ENCODE measurements at regions of chr3 and their contacts with region 1.

Region 1: GRCh38 chr3:46078712-46079400 is 51.6 kb upstream of the XCR1 start:
- DNase-seq: peak; percentile 78 to 94 (median 91)
- ATAC-seq: peak; percentile 99
- H3K4me3 ChIP-seq: no peak overlapping the region
- H3K4me3 Mint-ChIP-seq: no peak overlapping the region
- H3K27ac ChIP-seq: no peak overlapping the region
- H3K27ac Mint-ChIP-seq: no peak overlapping the region
- H3K4me1 ChIP-seq: peaks cover 6% of the 10 kb centered on the region
- H3K4me1 Mint-ChIP-seq: peaks cover 14% of the 10 kb centered on the region
- H3K27me3 ChIP-seq: no peaks in the 10 kb centered on the region
- H3K27me3 Mint-ChIP-seq: no peaks in the 10 kb centered on the region
- CTCF ChIP-seq: peak; percentile 99

Region 2: GRCh38 chr3:45367453-45367871 is 711.4 kb before region 1 on chr3:
- CTCF ChIA-PET with region 1: no interaction called
- POLR2A ChIA-PET with region 1: no interaction called
- intact Hi-C with region 1: no loop called
- DNase-seq: no peak
- ATAC-seq: no peak
- H3K4me3 ChIP-seq: no peak overlapping the region
- H3K4me3 Mint-ChIP-seq: no peak overlapping the region
- H3K27ac ChIP-seq: no peak overlapping the region
- H3K27ac Mint-ChIP-seq: no peak overlapping the region
- H3K4me1 ChIP-seq: no peaks in the 10 kb centered on the region
- H3K4me1 Mint-ChIP-seq: no peaks in the 10 kb centered on the region
- H3K27me3 ChIP-seq: no peaks in the 10 kb centered on the region
- H3K27me3 Mint-ChIP-seq: peaks cover 9% of the 10 kb centered on the region
- CTCF ChIP-seq: no peak

Region 3: GRCh38 chr3:45760878-45761711 is 317.8 kb before region 1 on chr3:
- CTCF ChIA-PET with region 1: interaction called, 71 read pairs
- POLR2A ChIA-PET with region 1: no interaction called
- intact Hi-C with region 1: loop called in 1 of 2 experiments (anchors 1 kb)
- DNase-seq: peak in 6 of 9 experiments; percentile 22 to 72 (median 55)
- ATAC-seq: peak; percentile 62
- H3K4me3 ChIP-seq: no peak overlapping the region
- H3K4me3 Mint-ChIP-seq: no peak overlapping the region
- H3K27ac ChIP-seq: no peak overlapping the region
- H3K27ac Mint-ChIP-seq: no peak overlapping the region
- H3K4me1 ChIP-seq: no peaks in the 10 kb centered on the region
- H3K4me1 Mint-ChIP-seq: peaks cover 3% of the 10 kb centered on the region
- H3K27me3 ChIP-seq: no peaks in the 10 kb centered on the region
- H3K27me3 Mint-ChIP-seq: peaks cover 3% of the 10 kb centered on the region
- CTCF ChIP-seq: peak; percentile 45

Region 4: GRCh38 chr3:45923755-45924154 is 155.1 kb before region 1 on chr3:
- CTCF ChIA-PET with region 1: interaction called, 499 read pairs
- POLR2A ChIA-PET with region 1: no interaction called
- intact Hi-C with region 1: no loop called
- DNase-seq: no peak
- ATAC-seq: no peak
- H3K4me3 ChIP-seq: no peak overlapping the region
- H3K4me3 Mint-ChIP-seq: no peak overlapping the region
- H3K27ac ChIP-seq: no peak overlapping the region
- H3K27ac Mint-ChIP-seq: no peak overlapping the region
- H3K4me1 ChIP-seq: peaks cover 9% of the 10 kb centered on the region
- H3K4me1 Mint-ChIP-seq: peaks cover 9% of the 10 kb centered on the region
- H3K27me3 ChIP-seq: no peaks in the 10 kb centered on the region
- H3K27me3 Mint-ChIP-seq: no peaks in the 10 kb centered on the region
- CTCF ChIP-seq: no peak

Region 5: GRCh38 chr3:45958321-45958791 is 120.5 kb before region 1 on chr3:
- CTCF ChIA-PET with region 1: interaction called, 182 read pairs
- POLR2A ChIA-PET with region 1: interaction called, 3 read pairs
- intact Hi-C with region 1: no loop called
- DNase-seq: peak in 2 of 9 experiments; percentile 41 to 65
- ATAC-seq: peak; percentile 71
- H3K4me3 ChIP-seq: no peak overlapping the region
- H3K4me3 Mint-ChIP-seq: peak overlapping the region; percentile 45
- H3K27ac ChIP-seq: peak overlapping the region in 1 of 2 experiments; percentile 78
- H3K27ac Mint-ChIP-seq: peak overlapping the region; percentile 79
- H3K4me1 ChIP-seq: peaks cover 4% of the 10 kb centered on the region
- H3K4me1 Mint-ChIP-seq: peaks cover 35% of the 10 kb centered on the region
- H3K27me3 ChIP-seq: no peaks in the 10 kb centered on the region
- H3K27me3 Mint-ChIP-seq: no peaks in the 10 kb centered on the region
- CTCF ChIP-seq: no peak

Region 6: DNA sequence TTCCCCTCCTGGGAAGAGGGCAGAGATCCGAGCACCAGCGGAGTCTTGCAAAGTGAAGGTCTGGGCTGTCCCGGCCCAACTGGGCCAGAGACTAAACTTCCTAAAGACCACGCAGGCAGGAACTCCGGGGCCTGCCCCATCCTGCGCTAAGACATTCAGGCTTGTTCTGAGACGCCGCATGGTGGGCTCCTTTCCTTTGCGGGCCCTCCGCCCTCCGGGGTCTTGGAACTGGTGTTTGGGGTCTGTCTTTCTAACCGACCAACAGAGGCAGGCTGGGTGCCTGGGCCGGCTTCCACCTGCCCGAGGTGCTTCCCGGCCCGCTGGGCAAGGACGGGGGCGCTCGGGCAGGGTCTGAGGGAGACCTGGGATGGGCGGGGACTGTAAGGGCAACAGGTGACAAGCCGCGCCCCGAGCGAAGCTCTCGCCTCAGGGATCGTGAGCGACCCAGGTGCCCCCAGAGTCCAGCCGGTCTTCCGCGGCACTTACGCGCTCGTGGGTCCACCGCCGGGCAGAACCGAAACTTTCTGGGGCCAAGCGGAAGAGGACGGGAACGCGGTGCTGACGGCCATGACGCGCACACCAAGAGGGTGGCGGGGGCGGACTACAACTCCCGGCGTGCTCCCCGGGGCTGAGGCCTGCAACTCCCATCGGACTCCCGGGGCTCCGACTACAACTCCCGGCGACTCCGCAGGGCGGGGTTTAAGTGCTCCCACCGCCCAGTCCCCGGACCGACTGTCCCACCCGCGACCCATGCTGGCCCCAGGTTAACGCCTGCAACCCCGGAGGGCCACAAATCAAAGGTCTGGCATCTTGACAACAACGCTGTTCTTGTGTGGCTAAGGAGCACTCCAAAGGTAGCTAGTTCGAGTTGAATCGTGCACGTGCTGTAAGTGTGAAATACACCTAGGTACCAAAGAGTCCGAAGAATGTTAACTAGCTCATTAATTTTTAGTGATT is 83.3 kb before region 1 on chr3 and contains the start of gene FYCO1:
- CTCF ChIA-PET with region 1: interaction called, 66 read pairs
- POLR2A ChIA-PET with region 1: interaction called, 4 read pairs
- intact Hi-C with region 1: loop called in 1 of 2 experiments (anchors 2 kb)
- DNase-seq: peak; percentile 70 to 93 (median 85)
- ATAC-seq: peak; percentile 78
- H3K4me3 ChIP-seq: peak within 1 kb of the TSS; percentile 77 to 90
- H3K4me3 Mint-ChIP-seq: peak within 1 kb of the TSS; percentile 86
- H3K27ac ChIP-seq: peak within 1 kb of the TSS; percentile 77 to 93
- H3K27ac Mint-ChIP-seq: peak within 1 kb of the TSS; percentile 93
- H3K4me1 ChIP-seq: peaks cover 42% of the 10 kb centered on the region
- H3K4me1 Mint-ChIP-seq: peaks cover 44% of the 10 kb centered on the region
- H3K27me3 ChIP-seq: no peaks in the 10 kb centered on the region
- H3K27me3 Mint-ChIP-seq: no peaks in the 10 kb centered on the region
- CTCF ChIP-seq: no peak
- total RNA-seq, gene FYCO1: 16.6 to 16.7 TPM

Region 7: DNA sequence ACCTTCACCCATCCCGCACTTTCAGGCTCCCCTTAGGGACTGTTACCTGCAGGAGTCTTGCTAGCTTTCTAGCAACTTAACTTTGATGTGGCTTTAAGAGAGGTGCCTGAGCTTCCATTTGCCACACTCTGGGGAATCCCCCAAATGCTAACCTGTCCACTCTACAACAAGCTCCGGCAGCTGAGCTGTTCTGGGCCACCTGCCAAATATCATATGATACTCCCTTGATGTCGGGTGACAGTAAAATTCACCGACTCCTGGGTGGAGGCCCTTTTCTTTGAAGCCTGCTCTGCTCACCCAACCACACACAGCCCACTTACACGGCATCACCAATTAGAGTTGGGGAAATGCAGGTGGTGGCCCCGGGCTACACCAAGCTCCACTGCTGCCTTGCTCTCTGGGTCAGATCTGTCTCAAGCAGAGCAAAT is 13.5 kb before region 1 on chr3:
- CTCF ChIA-PET with region 1: interaction called, 147 read pairs
- POLR2A ChIA-PET with region 1: interaction called, 6 read pairs
- intact Hi-C with region 1: loop called in 1 of 2 experiments (anchors 1 kb)
- DNase-seq: peak; percentile 62 to 97 (median 79)
- ATAC-seq: peak; percentile 87
- H3K4me3 ChIP-seq: no peak overlapping the region
- H3K4me3 Mint-ChIP-seq: peak overlapping the region; percentile 37
- H3K27ac ChIP-seq: peak overlapping the region in 1 of 2 experiments; percentile 63
- H3K27ac Mint-ChIP-seq: peak overlapping the region; percentile 88
- H3K4me1 ChIP-seq: peaks cover 78% of the 10 kb centered on the region
- H3K4me1 Mint-ChIP-seq: peaks cover 76% of the 10 kb centered on the region
- H3K27me3 ChIP-seq: no peaks in the 10 kb centered on the region
- H3K27me3 Mint-ChIP-seq: no peaks in the 10 kb centered on the region
- CTCF ChIP-seq: no peak

Region 8: GRCh38 chr3:46368569-46368968 is 289.7 kb after region 1 on chr3:
- CTCF ChIA-PET with region 1: interaction called, 56 read pairs
- POLR2A ChIA-PET with region 1: no interaction called
- intact Hi-C with region 1: no loop called
- DNase-seq: peak; percentile 35 to 89 (median 65)
- ATAC-seq: peak; percentile 72
- H3K4me3 ChIP-seq: no peak overlapping the region
- H3K4me3 Mint-ChIP-seq: peak overlapping the region; percentile 43
- H3K27ac ChIP-seq: peak overlapping the region in 1 of 2 experiments; percentile 82
- H3K27ac Mint-ChIP-seq: peak overlapping the region; percentile 81
- H3K4me1 ChIP-seq: peaks cover 23% of the 10 kb centered on the region
- H3K4me1 Mint-ChIP-seq: peaks cover 52% of the 10 kb centered on the region
- H3K27me3 ChIP-seq: no peaks in the 10 kb centered on the region
- H3K27me3 Mint-ChIP-seq: no peaks in the 10 kb centered on the region
- CTCF ChIP-seq: peak; percentile 53